IMR-90 (cell line): ENCODE measurements at regions of chr16 and their contacts with region 1.

Region 1: GRCh38 chr16:74309789-74310781 is 13.5 kb downstream of the PSMD7 start:
- DNase-seq: peak; percentile 56
- ATAC-seq: peak; percentile 66
- H3K4me3 ChIP-seq: no peak overlapping the region
- H3K27ac ChIP-seq: no peak overlapping the region
- H3K4me1 ChIP-seq: no peaks in the 10 kb centered on the region
- H3K27me3 ChIP-seq: no peaks in the 10 kb centered on the region
- CTCF ChIP-seq: peak; percentile 73
- POLR2A ChIP-seq: no peak
- RAD21 ChIP-seq: peak; percentile 74

Region 2: DNA sequence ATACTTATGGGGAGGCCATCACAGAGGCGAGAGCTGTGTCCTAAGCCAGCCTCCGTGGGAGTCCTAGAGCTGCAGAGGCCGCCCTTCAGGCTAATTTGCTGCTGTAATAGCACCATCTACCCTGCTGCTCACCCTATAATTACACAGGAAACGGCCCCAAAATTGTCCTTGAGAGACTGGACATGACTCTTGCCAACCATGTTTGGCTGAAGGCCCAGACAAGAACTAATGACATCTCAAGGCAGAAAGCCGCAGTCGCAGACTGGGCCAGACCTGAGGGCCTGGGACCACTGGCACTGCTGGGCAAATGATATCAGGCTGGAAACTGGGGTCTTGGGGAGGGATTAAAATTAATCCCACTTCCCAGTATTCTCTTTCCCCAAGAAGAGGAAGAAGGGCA is 10.6 kb after region 1 on chr16:
- CTCF ChIA-PET with region 1: interaction called, 3 read pairs
- POLR2A ChIA-PET with region 1: interaction called, 10 read pairs
- dilution Hi-C with region 1: no loop called
- in situ Hi-C with region 1: no loop called
- intact Hi-C with region 1: no loop called
- DNase-seq: no peak
- ATAC-seq: no peak
- H3K4me3 ChIP-seq: no peak overlapping the region
- H3K27ac ChIP-seq: no peak overlapping the region
- H3K4me1 ChIP-seq: 0 out of 2 replicates have a peak, but pooled peaks cover 1% of the 10 kb centered on the region
- H3K27me3 ChIP-seq: no peaks in the 10 kb centered on the region
- CTCF ChIP-seq: no peak
- POLR2A ChIP-seq: no peak
- RAD21 ChIP-seq: no peak

Region 3: GRCh38 chr16:74438492-74439041 is 128.5 kb after region 1 on chr16:
- CTCF ChIA-PET with region 1: no interaction called
- POLR2A ChIA-PET with region 1: no interaction called
- dilution Hi-C with region 1: no loop called
- in situ Hi-C with region 1: loop called (anchors 10 kb)
- intact Hi-C with region 1: no loop called
- DNase-seq: no peak
- ATAC-seq: no peak
- H3K4me3 ChIP-seq: no peak overlapping the region
- H3K27ac ChIP-seq: no peak overlapping the region
- H3K4me1 ChIP-seq: no peaks in the 10 kb centered on the region
- H3K27me3 ChIP-seq: no peaks in the 10 kb centered on the region
- CTCF ChIP-seq: no peak
- POLR2A ChIP-seq: no peak
- RAD21 ChIP-seq: no peak